ENCODE measurements at regions of chr4 and their contacts with region 1.

Region 1: DNA sequence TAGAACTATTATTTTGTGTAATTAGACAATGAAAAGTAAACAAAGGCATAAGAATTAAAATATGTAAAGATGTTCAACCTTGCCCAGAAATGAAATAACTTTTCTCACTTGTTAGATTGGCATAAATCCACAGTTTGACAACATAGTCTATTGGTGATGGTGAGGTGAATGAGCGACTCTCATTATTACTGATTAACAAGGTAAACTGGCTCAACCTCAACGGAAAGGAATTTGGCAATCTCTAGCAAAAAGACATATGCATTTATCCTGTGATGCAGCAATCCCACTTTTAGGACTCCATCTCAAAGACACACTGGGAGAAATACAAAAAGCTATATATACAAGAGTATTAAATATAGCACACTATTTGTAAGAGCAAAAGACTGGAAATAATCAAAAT is 22.3 kb downstream of the UBA6 start:
- DNase-seq: no peak
- H3K4me3 ChIP-seq: no peak overlapping the region
- H3K27ac ChIP-seq: no peak overlapping the region
- H3K4me1 ChIP-seq: no peaks in the 10 kb centered on the region
- H3K27me3 ChIP-seq: no peaks in the 10 kb centered on the region
- CTCF ChIP-seq: no peak
- EP300 ChIP-seq: no peak
- POLR2A ChIP-seq: no peak

Region 2: DNA sequence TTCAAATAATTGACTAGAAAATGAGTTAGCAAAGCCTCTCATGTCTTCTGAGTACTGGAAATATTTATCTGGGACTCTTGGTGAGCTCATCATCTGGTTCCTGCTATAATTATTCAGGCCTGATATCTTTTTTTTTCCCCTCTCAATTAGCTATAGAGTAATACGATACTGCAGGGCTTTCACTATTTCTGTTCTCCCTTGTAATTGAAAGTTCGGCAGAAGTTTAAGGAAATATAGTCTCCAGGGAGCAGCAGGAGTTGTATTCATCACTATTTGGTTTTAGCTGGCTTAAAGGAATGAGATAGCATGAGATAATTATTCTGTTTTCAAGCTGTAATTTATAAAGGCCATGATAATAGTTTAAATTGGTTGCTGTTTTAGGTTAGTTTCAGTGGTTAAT is 1629.8 kb before region 1 on chr4:
- in situ Hi-C with region 1: no loop called
- intact Hi-C with region 1: no loop called
- DNase-seq: no peak
- H3K4me3 ChIP-seq: no peak overlapping the region
- H3K27ac ChIP-seq: no peak overlapping the region
- H3K4me1 ChIP-seq: no peaks in the 10 kb centered on the region
- H3K27me3 ChIP-seq: no peaks in the 10 kb centered on the region
- CTCF ChIP-seq: no peak
- EP300 ChIP-seq: no peak
- POLR2A ChIP-seq: no peak

Region 3: GRCh38 chr4:67084783-67085182 is 593.8 kb before region 1 on chr4:
- in situ Hi-C with region 1: no loop called
- intact Hi-C with region 1: no loop called
- DNase-seq: no peak
- H3K4me3 ChIP-seq: no peak overlapping the region
- H3K27ac ChIP-seq: no peak overlapping the region
- H3K4me1 ChIP-seq: no peaks in the 10 kb centered on the region
- H3K27me3 ChIP-seq: no peaks in the 10 kb centered on the region
- CTCF ChIP-seq: no peak
- EP300 ChIP-seq: no peak
- POLR2A ChIP-seq: no peak

Region 4: DNA sequence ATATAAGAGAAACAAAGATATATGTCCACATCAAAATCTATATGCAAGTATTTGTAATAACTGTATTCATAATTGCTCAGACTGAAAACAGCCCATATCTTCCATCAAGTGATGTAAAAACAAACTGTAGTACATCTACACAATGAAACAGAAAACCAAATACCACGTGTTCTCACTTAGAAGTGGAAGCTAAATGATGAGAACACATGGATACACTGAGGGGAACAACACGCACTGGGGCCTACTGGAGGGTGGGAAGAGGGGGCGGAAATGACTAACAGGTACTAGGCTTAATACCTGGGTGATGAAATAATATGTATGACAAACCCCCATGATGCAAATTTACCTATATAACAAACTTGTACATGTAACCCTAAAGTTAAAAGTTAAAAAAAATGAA is 20.3 kb before region 1 on chr4:
- in situ Hi-C with region 1: no loop called
- intact Hi-C with region 1: loop called (anchors 1 kb)
- DNase-seq: no peak
- H3K4me3 ChIP-seq: no peak overlapping the region
- H3K27ac ChIP-seq: no peak overlapping the region
- H3K4me1 ChIP-seq: no peaks in the 10 kb centered on the region
- H3K27me3 ChIP-seq: no peaks in the 10 kb centered on the region
- CTCF ChIP-seq: no peak
- EP300 ChIP-seq: no peak
- POLR2A ChIP-seq: no peak

Measured in transverse colon (tissue), 4 donors.